Activated naive CD4-positive, alpha-beta T cell treated with anti-CD3 and anti-CD28 coated beads for 36 hours (primary cell): ENCODE measurements at regions of chr2 and their contacts with region 1.

Region 1: GRCh38 chr2:173354601-173355131 is at the start of gene CDCA7:
- DNase-seq: peak; percentile 77
- H3K4me3 Mint-ChIP-seq: peak within 1 kb of the TSS; percentile 83
- H3K27ac Mint-ChIP-seq: peak within 1 kb of the TSS; percentile 85
- H3K4me1 Mint-ChIP-seq: peaks cover 14% of the 10 kb centered on the region
- H3K27me3 Mint-ChIP-seq: peaks cover 51% of the 10 kb centered on the region
- total RNA-seq, gene CDCA7: 74.0 to 74.7 TPM

Region 2: DNA sequence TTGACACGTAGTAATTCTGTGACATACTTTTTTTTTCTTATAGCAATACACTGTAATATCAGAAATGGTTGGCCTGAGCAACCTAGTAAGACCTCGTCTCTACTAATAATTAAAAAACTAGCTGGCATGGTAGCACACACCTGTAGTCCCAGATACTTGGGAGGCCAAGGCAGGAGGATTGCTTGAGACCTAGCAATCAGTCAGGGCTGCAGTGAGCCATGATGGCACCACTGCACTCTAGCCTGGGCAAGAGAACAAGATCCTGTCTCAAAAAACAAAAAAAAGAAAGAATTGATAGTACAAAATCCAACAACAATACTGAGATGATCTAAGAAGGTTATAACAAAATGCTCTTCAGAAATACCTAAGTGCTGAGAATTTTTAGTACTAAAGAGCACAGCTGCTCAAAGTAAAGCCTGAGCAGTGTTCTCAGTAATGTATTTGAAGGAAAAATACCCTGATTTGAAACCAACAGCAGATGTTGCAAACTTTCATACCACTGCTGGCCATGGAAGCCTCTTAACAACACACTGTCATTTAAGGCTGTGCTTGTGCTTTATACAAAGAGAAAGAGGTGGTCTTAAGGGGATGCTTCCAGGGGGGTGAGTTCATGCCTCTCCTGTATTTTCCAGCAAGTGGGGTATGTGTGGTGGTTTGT is 132.6 kb before region 1 on chr2:
- CTCF ChIA-PET with region 1: no interaction called
- intact Hi-C with region 1: loop called (anchors 10 kb)
- DNase-seq: no peak
- H3K4me3 Mint-ChIP-seq: no peak overlapping the region
- H3K27ac Mint-ChIP-seq: no peak overlapping the region
- H3K4me1 Mint-ChIP-seq: peaks cover 3% of the 10 kb centered on the region
- H3K27me3 Mint-ChIP-seq: peaks cover 9% of the 10 kb centered on the region

Region 3: DNA sequence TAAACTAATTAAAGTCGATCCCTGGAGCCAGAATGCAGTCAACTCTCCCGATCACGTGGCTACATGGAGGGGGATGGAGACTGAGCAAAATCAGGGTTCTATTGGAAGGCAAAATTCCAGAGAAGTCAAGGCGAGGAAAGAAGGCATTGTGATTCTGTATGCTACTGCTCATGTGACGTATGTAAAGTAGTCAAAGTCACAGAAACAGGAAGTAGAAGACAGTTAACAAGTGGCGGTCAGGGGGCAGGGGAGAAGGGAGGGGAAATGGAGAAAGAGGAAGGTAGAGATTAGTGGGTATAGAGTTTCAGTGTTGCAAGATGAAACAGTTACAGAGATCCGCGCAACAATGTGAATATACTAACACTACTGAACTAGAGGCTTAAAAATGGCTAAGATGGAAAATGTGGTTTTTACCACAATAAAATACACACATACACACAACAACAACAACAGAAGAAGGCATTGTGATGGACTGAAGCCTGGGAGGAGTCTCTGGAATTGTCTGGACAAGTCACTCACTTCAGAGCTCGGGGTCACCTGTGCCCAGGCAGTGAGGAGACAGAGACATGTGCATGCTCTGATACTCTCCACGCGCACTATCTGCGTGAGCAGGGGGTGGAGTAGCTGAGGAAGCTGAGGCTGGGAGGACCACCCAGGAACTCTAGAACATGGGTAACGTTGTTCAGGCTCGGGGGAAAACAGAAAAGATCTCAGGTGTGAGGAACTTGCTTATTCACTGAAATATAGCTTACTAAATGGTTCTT is 89.9 kb before region 1 on chr2:
- CTCF ChIA-PET with region 1: no interaction called
- intact Hi-C with region 1: loop called (anchors 1 kb)
- DNase-seq: peak; percentile 61
- H3K4me3 Mint-ChIP-seq: peak overlapping the region; percentile 2
- H3K27ac Mint-ChIP-seq: no peak overlapping the region
- H3K4me1 Mint-ChIP-seq: peaks cover 12% of the 10 kb centered on the region
- H3K27me3 Mint-ChIP-seq: peaks cover 4% of the 10 kb centered on the region

Region 4: DNA sequence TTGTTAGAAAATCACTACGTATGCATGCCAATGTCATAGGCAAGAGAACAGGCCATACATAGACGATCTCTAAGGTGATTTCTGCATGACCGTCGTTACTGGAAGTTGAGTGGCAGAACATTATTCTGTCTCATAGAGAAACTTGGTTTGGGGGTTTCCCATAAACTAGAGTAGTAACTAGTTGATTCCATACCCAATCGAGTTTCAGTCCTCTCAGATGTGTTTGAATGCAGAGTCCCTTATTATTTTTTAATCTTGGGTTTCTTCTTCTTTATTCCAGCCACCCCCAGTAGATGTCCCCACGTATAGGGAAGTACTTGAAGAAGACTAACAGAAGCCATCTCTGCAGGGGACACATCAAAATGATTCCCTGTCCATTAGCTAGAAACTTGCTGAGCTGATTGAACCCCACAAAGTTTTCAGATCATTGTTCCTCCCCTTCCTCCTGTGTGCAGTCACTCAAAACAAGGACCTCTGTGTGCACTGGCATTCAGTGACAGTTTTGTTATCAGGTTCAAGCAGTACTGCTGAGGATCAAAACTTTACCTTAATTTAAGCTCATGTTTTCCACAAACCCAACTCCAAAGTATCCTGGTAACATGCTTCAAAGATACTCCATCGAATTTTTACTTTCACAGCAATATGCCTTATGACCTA is 68.4 kb before region 1 on chr2:
- CTCF ChIA-PET with region 1: no interaction called
- intact Hi-C with region 1: loop called (anchors 1 kb)
- DNase-seq: peak; percentile 12
- H3K4me3 Mint-ChIP-seq: no peak overlapping the region
- H3K27ac Mint-ChIP-seq: no peak overlapping the region
- H3K4me1 Mint-ChIP-seq: peaks cover 5% of the 10 kb centered on the region
- H3K27me3 Mint-ChIP-seq: no peaks in the 10 kb centered on the region

Region 5: DNA sequence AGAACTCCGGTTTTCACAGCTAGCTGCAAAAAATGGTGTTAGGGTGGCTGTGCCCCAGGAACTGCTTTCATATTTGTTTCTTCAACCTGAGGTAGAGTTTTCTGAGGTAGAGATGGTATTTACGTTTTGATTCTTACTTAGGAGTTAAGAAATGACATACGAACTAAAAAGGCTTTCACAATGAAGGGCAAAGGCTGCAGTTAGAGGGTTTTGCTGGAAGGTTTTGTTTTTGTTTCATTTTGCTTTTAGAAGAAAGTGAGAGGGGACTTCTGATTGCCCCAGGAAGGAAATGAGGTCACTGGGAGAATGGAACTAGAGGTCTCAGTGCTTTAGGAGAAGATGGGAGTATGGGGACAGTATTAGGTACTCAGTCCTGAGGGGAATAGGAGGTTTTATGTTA is 15.5 kb after region 1 on chr2:
- CTCF ChIA-PET with region 1: no interaction called
- intact Hi-C with region 1: loop called (anchors 1 kb)
- DNase-seq: no peak
- H3K4me3 Mint-ChIP-seq: no peak overlapping the region
- H3K27ac Mint-ChIP-seq: peak overlapping the region; percentile 56
- H3K4me1 Mint-ChIP-seq: peaks cover 14% of the 10 kb centered on the region
- H3K27me3 Mint-ChIP-seq: no peaks in the 10 kb centered on the region

Region 6: DNA sequence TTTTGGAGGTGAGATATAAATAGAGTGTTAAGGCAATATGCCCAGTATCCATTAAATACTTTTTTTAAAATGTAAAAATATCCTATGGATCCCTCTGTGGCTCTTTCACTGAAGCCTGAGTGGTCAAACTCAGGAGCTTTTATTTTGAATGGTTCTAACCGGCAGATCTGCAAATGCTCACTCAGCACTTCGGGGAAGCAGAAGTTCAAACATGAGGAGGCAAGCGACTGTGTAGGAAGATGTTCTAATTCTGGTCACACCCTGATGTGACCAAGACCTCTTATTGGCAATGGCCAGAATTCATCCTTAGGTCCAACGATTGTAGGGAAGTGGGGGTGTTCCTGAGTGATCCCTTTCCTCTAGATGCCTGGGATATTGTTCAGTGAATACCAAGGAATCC is 168.8 kb after region 1 on chr2:
- CTCF ChIA-PET with region 1: no interaction called
- intact Hi-C with region 1: no loop called
- DNase-seq: no peak
- H3K4me3 Mint-ChIP-seq: no peak overlapping the region
- H3K27ac Mint-ChIP-seq: no peak overlapping the region
- H3K4me1 Mint-ChIP-seq: no peaks in the 10 kb centered on the region
- H3K27me3 Mint-ChIP-seq: peaks cover 5% of the 10 kb centered on the region

Region 7: DNA sequence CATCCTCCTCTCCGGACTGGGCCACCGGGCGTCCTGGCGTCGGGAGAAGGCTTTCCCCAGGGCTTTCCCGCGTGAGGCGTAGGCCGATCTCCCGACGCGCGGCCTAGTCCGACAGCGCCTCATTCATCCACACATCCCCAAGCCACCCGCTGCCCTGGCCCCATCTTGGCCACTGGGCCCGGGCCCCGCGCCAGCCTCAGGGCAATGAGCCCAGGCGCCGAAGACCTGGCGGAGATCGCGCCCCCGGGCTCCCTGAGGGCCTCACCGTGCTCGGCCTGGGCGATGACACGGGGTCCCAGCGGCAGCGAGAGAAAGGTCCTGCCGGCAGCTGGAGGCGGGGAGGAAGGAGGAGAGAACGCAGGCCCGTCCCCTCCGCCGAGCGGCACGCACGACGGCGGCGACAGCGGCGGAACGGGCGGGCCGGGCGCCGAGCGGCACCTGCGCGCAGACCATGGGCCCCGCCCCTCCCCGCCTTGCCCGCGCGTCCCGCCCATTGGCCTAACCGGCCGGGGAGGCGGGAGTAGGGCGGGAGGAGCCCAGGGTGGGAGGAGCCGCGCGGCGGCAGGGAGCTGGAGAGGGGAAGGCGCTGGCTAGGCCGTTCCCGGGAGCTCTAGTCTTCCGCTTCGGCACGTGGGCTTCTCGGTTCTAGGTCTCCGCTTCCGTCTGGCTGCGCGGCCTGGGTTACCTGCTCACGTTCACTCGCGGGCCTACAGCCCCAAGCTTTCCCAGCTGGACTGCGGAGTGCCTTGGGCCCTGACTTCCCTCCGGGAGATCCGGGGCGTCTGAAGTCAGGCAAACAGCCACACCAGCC is 893.7 kb after region 1 on chr2 and contains the start of gene OLA1:
- CTCF ChIA-PET with region 1: no interaction called
- intact Hi-C with region 1: loop called (anchors 1 kb)
- DNase-seq: peak; percentile 97
- H3K4me3 Mint-ChIP-seq: peak within 1 kb of the TSS; percentile 84
- H3K27ac Mint-ChIP-seq: peak within 1 kb of the TSS; percentile 79
- H3K4me1 Mint-ChIP-seq: peaks cover 25% of the 10 kb centered on the region
- H3K27me3 Mint-ChIP-seq: no peaks in the 10 kb centered on the region
- total RNA-seq, gene OLA1: 140 to 142 TPM

Region 8: DNA sequence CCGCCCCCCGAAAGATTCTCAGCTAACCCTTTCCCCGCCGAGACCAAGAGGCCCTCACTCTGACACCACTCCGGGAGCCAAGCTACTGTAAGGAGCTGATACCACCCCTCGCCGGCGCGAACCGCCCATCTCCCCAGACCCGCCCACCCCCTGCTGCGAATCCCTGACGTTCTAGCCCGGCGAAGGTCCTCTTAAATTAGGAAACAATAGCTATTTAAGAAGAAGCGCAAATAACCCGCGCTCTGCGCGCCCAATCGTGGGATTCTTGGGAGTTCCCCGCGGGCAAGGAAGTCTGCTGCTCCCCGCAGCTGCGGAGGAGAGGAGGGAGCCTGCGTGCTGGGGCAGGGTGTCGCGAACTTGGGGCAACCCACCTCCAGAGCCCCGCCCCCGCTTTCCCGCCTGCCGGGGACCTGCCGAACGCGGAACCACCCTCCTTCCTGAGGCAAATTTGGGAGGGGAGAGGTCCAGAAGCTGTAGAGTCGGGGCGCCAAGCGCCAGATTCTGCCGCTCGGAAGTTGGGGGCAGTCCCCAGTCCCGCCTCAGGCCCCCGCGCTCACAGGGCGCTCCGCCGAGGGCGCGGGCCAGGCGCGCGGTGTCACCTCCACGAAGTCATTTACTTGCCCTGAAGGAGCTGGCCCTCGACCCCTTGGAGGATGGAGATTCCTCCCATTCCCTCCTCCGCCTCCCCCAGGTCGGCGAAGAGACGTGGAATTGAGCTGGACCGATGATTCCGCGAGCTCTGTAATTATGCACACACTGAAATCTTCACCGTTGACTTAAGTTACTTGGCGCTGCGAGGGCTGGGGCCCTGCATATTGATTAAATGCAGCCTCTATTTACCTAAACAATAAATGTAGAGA is 971.7 kb after region 1 on chr2:
- CTCF ChIA-PET with region 1: no interaction called
- intact Hi-C with region 1: loop called (anchors 5 kb)
- DNase-seq: peak; percentile 39
- H3K4me3 Mint-ChIP-seq: peak overlapping the region; percentile 70
- H3K27ac Mint-ChIP-seq: no peak overlapping the region
- H3K4me1 Mint-ChIP-seq: peaks cover 25% of the 10 kb centered on the region
- H3K27me3 Mint-ChIP-seq: peaks cover 74% of the 10 kb centered on the region